ENCODE measurements at regions of chr7 and their contacts with region 1.

Region 1: GRCh38 chr7:130887182-130888016 is 153.4 kb upstream of the KLF14 start:
- DNase-seq: no peak
- H3K4me3 ChIP-seq: no peak overlapping the region
- H3K27ac ChIP-seq: no peak overlapping the region
- H3K4me1 ChIP-seq: no peaks in the 10 kb centered on the region
- H3K27me3 ChIP-seq: no peaks in the 10 kb centered on the region

Region 2: GRCh38 chr7:130712416-130712815 is 175.0 kb before region 1 on chr7:
- CTCF ChIA-PET with region 1: no interaction called
- POLR2A ChIA-PET with region 1: no interaction called
- DNase-seq: no peak
- H3K4me3 ChIP-seq: no peak overlapping the region
- H3K27ac ChIP-seq: no peak overlapping the region
- H3K4me1 ChIP-seq: no peaks in the 10 kb centered on the region
- H3K27me3 ChIP-seq: peaks cover 0 to 3% (median 1%) of the 10 kb centered on the region in 5 experiments

Region 3: GRCh38 chr7:130875265-130875741 is 12.1 kb before region 1 on chr7:
- CTCF ChIA-PET with region 1: interaction called, 17 read pairs
- POLR2A ChIA-PET with region 1: no interaction called
- DNase-seq: peak; percentile 40 to 49 (median 46)
- H3K4me3 ChIP-seq: no peak overlapping the region
- H3K27ac ChIP-seq: no peak overlapping the region
- H3K4me1 ChIP-seq: peaks cover 0 to 9% (median 3%) of the 10 kb centered on the region in 4 experiments
- H3K27me3 ChIP-seq: no peaks in the 10 kb centered on the region

Region 4: GRCh38 chr7:130966246-130967009 is 79.0 kb after region 1 on chr7:
- CTCF ChIA-PET with region 1: no interaction called
- POLR2A ChIA-PET with region 1: no interaction called
- DNase-seq: no peak
- H3K4me3 ChIP-seq: no peak overlapping the region
- H3K27ac ChIP-seq: no peak overlapping the region
- H3K4me1 ChIP-seq: peaks cover 12 to 38% (median 27%) of the 10 kb centered on the region in 4 experiments
- H3K27me3 ChIP-seq: no peaks in the 10 kb centered on the region

Measured in common myeloid progenitor, CD34-positive (primary cell).